Activated CD4-positive, alpha-beta T cell treated with anti-CD3 and anti-CD28 coated beads for 36 hours (primary cell): ENCODE measurements at regions of chr7 and their contacts with region 1.

Region 1: GRCh38 chr7:92633211-92633906 is 43.2 kb upstream of the FAM133B start:
- DNase-seq: peak; percentile 46
- ATAC-seq: peak; percentile 34
- H3K4me3 Mint-ChIP-seq: peak overlapping the region; percentile 48
- H3K27ac Mint-ChIP-seq: peak overlapping the region; percentile 89
- H3K4me1 Mint-ChIP-seq: peaks cover 82% of the 10 kb centered on the region
- H3K27me3 Mint-ChIP-seq: no peaks in the 10 kb centered on the region

Region 2: DNA sequence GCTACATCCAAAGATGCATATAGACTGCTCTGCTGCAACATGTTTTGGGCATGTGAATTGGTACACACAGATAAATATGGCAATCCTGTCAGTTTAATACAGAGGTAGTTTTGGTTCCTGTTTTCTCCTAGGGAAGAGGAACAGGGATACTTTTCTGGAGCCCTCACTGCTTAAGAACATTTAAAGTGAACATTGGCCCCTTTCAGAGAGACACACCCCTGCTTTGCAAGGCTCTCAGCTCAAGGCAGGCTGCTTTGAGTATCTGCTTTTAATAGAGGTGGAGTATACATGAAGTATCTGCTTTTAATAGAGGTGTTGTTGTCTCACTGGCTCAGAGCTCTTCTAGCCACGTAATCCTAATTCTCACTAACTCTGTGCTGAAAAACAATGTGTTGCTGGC is 538.0 kb before region 1 on chr7:
- CTCF ChIA-PET with region 1: no interaction called
- POLR2A ChIA-PET with region 1: no interaction called
- intact Hi-C with region 1: no loop called
- DNase-seq: no peak
- ATAC-seq: no peak
- H3K4me3 Mint-ChIP-seq: no peak overlapping the region
- H3K27ac Mint-ChIP-seq: no peak overlapping the region
- H3K4me1 Mint-ChIP-seq: no peaks in the 10 kb centered on the region
- H3K27me3 Mint-ChIP-seq: no peaks in the 10 kb centered on the region

Region 3: DNA sequence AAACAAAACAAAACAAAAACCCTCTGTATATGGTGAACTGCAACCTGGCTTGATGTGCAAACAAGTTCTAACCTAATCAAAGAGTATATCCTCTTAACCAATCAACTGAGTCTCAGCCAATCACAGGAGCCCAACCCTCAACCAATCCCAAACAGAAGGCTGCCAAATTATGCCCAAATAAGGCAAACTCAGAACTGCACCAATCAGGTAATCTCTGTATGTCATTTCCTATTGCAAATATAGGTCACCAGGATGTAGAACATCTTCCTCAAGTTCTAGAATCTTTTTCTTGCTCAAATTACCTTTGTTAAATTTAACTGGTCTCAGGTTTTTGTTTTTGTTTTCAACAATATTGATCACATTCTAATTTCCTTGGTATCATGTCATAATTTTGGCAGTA is 48.4 kb before region 1 on chr7:
- CTCF ChIA-PET with region 1: no interaction called
- POLR2A ChIA-PET with region 1: no interaction called
- intact Hi-C with region 1: no loop called
- DNase-seq: peak; percentile 20
- ATAC-seq: peak; percentile 20
- H3K4me3 Mint-ChIP-seq: no peak overlapping the region
- H3K27ac Mint-ChIP-seq: peak overlapping the region; percentile 83
- H3K4me1 Mint-ChIP-seq: peaks cover 65% of the 10 kb centered on the region
- H3K27me3 Mint-ChIP-seq: no peaks in the 10 kb centered on the region

Region 4: GRCh38 chr7:92621026-92621540 is 12.3 kb before region 1 on chr7:
- CTCF ChIA-PET with region 1: interaction called, 13 read pairs
- POLR2A ChIA-PET with region 1: interaction called, 7 read pairs
- intact Hi-C with region 1: loop called in 1 of 2 experiments (anchors 1 kb)
- DNase-seq: peak; percentile 90
- ATAC-seq: peak; percentile 78
- H3K4me3 Mint-ChIP-seq: peak overlapping the region; percentile 0
- H3K27ac Mint-ChIP-seq: peak overlapping the region; percentile 90
- H3K4me1 Mint-ChIP-seq: peaks cover 50% of the 10 kb centered on the region
- H3K27me3 Mint-ChIP-seq: no peaks in the 10 kb centered on the region

Region 5: GRCh38 chr7:92669616-92670165 is 36.3 kb after region 1 on chr7:
- CTCF ChIA-PET with region 1: interaction called, 3 read pairs
- POLR2A ChIA-PET with region 1: interaction called, 5 read pairs
- intact Hi-C with region 1: loop called (anchors 1 to 2 kb)
- DNase-seq: no peak
- ATAC-seq: no peak
- H3K4me3 Mint-ChIP-seq: no peak overlapping the region
- H3K27ac Mint-ChIP-seq: no peak overlapping the region
- H3K4me1 Mint-ChIP-seq: peaks cover 49% of the 10 kb centered on the region
- H3K27me3 Mint-ChIP-seq: no peaks in the 10 kb centered on the region

Region 6: DNA sequence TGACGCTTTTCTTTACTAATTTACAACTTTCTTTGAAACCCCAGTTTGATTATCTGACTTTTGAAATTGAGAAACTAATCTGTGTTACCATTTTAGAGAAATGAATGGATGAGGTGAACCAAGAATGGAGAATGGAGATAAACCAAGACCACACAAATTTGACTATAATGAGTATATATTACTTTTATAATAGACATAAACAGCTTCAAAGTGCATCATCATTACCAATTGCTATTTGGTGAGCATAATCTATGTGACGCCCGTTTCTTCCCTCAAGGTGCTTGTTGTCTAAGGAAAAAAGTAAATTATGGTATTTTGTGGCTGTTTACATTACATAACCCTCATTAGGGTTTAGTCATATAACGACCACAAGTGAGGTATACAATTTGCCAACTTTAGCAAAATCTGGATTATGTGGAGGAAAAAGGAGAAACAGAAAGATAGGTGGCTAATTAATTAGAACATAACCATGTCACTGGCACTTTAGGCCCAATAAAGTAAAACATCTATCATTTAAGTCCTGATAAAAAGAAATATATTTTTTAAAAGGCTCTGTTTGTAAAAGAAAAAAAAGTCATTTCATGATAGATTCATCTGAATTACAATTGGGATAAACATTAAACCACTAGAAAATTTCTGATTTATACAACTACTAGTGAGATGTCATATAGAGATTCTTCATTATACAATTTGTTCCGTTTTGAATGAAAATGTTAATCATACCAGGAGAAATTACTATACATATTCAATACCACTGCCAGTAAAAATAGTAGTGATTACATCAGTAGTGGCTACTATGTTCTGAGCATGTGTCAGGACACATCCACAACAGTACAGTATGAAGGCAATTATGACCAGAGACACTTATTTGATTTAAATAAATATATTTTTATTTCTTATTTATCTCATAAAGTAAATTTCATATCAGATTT is 75.0 kb after region 1 on chr7:
- CTCF ChIA-PET with region 1: no interaction called
- POLR2A ChIA-PET with region 1: interaction called, 5 read pairs
- intact Hi-C with region 1: loop called (anchors 1 kb)
- DNase-seq: no peak
- ATAC-seq: peak; percentile 84
- H3K4me3 Mint-ChIP-seq: no peak overlapping the region
- H3K27ac Mint-ChIP-seq: peak overlapping the region; percentile 86
- H3K4me1 Mint-ChIP-seq: peaks cover 52% of the 10 kb centered on the region
- H3K27me3 Mint-ChIP-seq: no peaks in the 10 kb centered on the region

Region 7: GRCh38 chr7:92768501-92769393 is 135.4 kb after region 1 on chr7:
- CTCF ChIA-PET with region 1: no interaction called
- POLR2A ChIA-PET with region 1: no interaction called
- intact Hi-C with region 1: loop called in 1 of 2 experiments (anchors 2 kb)
- DNase-seq: peak; percentile 61
- ATAC-seq: peak; percentile 95
- H3K4me3 Mint-ChIP-seq: peak overlapping the region; percentile 21
- H3K27ac Mint-ChIP-seq: peak overlapping the region; percentile 89
- H3K4me1 Mint-ChIP-seq: peaks cover 67% of the 10 kb centered on the region
- H3K27me3 Mint-ChIP-seq: no peaks in the 10 kb centered on the region

Region 8: GRCh38 chr7:93036807-93037206 is 403.4 kb after region 1 on chr7:
- CTCF ChIA-PET with region 1: interaction called, 4 read pairs
- POLR2A ChIA-PET with region 1: no interaction called
- intact Hi-C with region 1: loop called in 1 of 2 experiments (anchors 5 kb)
- DNase-seq: peak; percentile 67
- ATAC-seq: peak; percentile 97
- H3K4me3 Mint-ChIP-seq: no peak overlapping the region
- H3K27ac Mint-ChIP-seq: peak overlapping the region; percentile 74
- H3K4me1 Mint-ChIP-seq: peaks cover 20% of the 10 kb centered on the region
- H3K27me3 Mint-ChIP-seq: no peaks in the 10 kb centered on the region